ENCODE measurements at regions of chr5 and their contacts with region 1.

Region 1: DNA sequence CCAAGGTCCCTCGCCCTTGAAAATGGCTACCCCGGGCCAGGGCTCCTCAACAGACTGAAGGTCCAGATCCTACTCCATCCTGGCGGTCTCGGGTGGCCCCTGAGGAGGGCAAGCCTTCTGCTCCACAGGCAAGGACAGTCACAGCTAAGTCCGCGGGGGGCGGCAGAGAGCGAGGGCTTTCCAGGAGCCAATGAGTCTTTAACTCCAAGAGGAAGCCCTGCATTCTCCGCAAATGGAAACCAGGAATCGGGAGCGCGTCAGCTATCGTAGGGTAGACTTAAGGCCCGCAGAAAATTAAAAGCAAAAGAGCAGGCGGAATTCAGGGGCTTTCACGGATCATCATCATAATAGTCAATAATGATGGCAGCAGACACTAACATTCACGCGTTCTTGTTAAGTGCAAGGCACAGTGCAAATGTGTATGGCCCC is 87.8 kb upstream of the TNFAIP8 start:
- DNase-seq: peak; percentile 80

Region 2: DNA sequence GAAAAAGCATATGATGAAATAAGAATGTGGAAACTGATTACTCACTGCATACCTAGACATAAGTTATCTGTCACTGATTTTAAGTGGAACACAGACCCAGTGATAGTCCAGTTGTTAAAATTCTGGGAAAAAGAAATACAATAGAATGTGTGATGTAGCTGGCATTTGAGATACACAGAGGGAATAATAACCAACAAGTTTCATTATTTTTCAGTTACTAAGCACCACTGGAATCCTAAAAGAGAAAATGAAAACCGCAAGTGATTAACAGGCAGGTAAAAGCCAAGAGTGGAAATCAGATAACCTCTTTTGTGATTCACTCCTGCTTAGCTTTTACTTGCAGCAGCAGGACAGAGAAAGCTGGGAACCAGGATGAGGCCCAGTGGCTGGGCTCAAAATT is 1699.3 kb before region 1 on chr5:
- CTCF ChIA-PET with region 1: no interaction called
- POLR2A ChIA-PET with region 1: no interaction called
- DNase-seq: no peak

Region 3: GRCh38 chr5:119070828-119071572 is 197.0 kb before region 1 on chr5 and contains the start of gene DMXL1:
- CTCF ChIA-PET with region 1: no interaction called
- POLR2A ChIA-PET with region 1: interaction called, 10 read pairs
- DNase-seq: peak; percentile 87

Region 4: GRCh38 chr5:119290161-119290569 is 22.2 kb after region 1 on chr5:
- CTCF ChIA-PET with region 1: no interaction called
- POLR2A ChIA-PET with region 1: interaction called, 12 read pairs
- DNase-seq: no peak

Region 5: DNA sequence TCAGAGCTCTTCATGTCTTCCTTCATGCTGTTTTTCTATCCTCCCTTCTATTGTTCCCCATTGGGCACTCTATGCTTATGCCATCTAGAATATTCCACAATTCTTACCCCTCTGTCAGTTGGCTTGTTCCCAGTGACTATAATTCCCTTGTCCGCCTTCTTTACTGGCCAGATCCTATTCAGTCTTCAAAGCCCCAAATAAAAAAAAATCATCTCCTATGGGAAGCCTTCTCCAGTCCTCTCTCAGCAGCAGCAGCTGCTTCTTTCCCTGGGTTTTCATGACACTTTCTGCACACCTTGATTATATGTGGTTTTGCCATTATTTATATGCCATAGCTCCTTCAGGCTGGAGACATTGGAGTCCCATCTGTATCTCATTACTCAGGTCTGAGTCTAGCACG is 33.2 kb after region 1 on chr5:
- CTCF ChIA-PET with region 1: no interaction called
- POLR2A ChIA-PET with region 1: interaction called, 10 read pairs
- DNase-seq: no peak